ENCODE measurements at regions of chr18 and their contacts with region 1.

Region 1: GRCh38 chr18:21612125-21612991 is at the start of gene SNRPD1:
- DNase-seq: peak; percentile 84 to 92
- ATAC-seq: peak; percentile 98
- total RNA-seq, gene SNRPD1: 24.2 to 44.4 TPM

Region 2: DNA sequence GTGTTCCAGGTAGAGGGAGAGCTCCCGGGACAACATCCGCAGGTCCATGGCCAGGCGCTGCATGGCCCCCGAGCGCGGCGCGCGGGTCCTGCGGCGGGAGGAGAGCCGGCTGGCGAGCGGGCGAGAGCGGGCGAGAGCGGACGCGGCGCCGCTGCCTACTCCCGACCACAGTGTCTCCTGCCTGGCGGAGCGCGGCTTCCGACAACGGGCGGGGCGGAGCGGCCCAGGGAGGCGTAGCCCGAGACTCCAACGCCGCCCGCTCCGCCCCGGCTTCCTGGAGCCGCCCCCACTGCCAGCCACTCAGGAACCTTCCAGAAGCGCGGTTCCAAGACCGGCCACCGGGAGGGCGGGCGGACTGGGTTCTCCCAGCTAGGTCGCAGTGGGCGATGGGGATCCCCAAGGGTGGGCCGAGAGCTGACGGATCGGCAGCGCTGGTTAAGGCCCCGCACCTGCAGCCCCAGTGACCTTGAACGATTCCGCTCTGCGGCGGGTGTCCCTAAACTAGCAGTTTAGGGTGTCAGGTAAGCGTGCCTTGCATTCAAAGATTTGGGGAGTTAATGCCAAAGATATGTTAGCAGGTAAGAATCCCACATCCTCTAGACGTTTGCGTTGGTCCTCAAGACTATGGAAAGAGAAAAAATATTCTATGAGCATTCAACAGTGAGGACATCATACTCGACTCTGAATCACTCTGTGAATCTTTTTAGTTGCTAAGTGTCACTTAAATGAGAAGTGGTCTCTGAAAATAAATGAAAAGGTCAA is 92.4 kb after region 1 on chr18 and contains the start of gene ABHD3:
- intact Hi-C with region 1: loop called in 1 of 2 experiments (anchors 10 kb)
- DNase-seq: peak; percentile 94 to 97
- ATAC-seq: peak; percentile 93
- total RNA-seq, gene ABHD3: 131 TPM

Region 3: GRCh38 chr18:21740724-21741510 is 128.6 kb after region 1 on chr18 and contains the start of gene MIB1:
- intact Hi-C with region 1: loop called in 1 of 2 experiments (anchors 10 kb)
- DNase-seq: peak; percentile 44 to 99
- ATAC-seq: peak; percentile 69
- total RNA-seq, gene MIB1: 27.3 to 31.9 TPM

Measured in left colon (tissue), 2 donors.